ENCODE measurements at regions of chr20 and their contacts with region 1.

Region 1: GRCh38 chr20:14337400-14338171 is at the start of gene FLRT3:
- DNase-seq: peak; percentile 97
- ATAC-seq: peak; percentile 94
- H3K4me3 ChIP-seq: peak within 1 kb of the TSS; percentile 75
- H3K27ac ChIP-seq: peak within 1 kb of the TSS; percentile 44
- H3K4me1 ChIP-seq: peaks cover 15% of the 10 kb centered on the region
- H3K27me3 ChIP-seq: no peaks in the 10 kb centered on the region
- CTCF ChIP-seq: peak; percentile 96
- total RNA-seq, gene FLRT3: 2.6 and 2.8 TPM in 2 replicates

Region 2: GRCh38 chr20:14142171-14142570 is 195.4 kb before region 1 on chr20:
- CTCF ChIA-PET with region 1: interaction called, 4 read pairs
- POLR2A ChIA-PET with region 1: no interaction called
- intact Hi-C with region 1: loop called (anchors 2 kb)
- DNase-seq: peak; percentile 75
- ATAC-seq: peak; percentile 93
- H3K4me3 ChIP-seq: no peak overlapping the region
- H3K27ac ChIP-seq: no peak overlapping the region
- H3K4me1 ChIP-seq: no peaks in the 10 kb centered on the region
- H3K27me3 ChIP-seq: no peaks in the 10 kb centered on the region
- CTCF ChIP-seq: peak; percentile 81

Region 3: DNA sequence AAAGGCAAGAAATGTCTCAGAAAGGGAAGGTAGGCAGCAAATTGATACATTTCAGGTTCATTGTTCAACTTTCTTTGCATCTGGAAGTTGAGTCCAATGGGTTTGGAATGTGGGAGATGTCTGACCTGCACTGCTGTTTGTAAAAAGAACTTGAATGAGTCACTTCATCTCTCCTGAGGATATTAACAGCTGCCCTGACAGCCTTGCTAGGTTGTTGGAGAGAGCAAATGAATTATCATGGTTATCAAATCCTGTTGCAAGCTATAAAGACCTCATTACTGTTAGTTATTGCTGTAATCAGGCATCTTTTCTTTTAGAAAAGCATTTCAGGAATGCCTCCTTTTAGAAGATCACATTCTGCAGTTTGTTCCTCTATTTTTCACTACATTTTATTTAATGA is 22.8 kb after region 1 on chr20:
- CTCF ChIA-PET with region 1: no interaction called
- POLR2A ChIA-PET with region 1: no interaction called
- intact Hi-C with region 1: no loop called
- DNase-seq: peak; percentile 30
- ATAC-seq: peak; percentile 35; the same call in 1 of the 2 replicates
- H3K4me3 ChIP-seq: no peak overlapping the region
- H3K27ac ChIP-seq: no peak overlapping the region
- H3K4me1 ChIP-seq: no peaks in the 10 kb centered on the region
- H3K27me3 ChIP-seq: no peaks in the 10 kb centered on the region
- CTCF ChIP-seq: no peak

Region 4: DNA sequence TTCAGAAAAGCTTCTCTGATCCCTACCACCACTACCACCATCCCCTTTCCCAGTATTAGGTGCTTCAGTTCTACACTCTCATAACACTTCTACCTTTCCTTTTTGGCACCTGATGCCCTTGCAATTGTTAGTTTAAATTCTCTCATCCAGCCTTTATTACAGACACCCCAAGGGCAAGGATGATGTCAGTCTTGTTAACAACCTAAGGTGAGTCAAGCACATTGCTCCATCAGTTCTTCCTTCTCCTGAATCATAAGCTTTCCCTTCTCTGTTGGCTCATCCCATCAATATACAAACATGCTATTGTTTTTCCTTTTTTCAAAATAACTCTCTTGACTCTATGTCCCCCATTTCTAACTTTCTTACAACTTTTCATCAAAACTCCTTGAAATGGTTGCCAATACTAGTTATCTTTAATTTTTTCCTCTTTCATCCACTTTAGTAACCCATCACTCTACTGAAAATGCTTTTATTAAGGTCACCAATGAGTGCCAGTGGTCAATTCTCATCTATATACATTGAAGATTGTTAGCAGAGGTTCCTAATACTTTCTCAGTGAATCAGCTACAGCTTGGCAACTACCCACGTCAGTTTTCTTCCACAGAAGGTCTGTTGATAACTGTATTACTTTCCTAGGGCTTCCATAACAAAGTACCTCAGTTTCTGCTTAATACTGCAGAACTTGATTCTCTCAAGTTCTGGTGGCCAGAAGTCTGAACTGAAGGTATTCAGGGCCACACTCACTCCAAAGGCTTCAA is 97.0 kb after region 1 on chr20:
- CTCF ChIA-PET with region 1: no interaction called
- POLR2A ChIA-PET with region 1: no interaction called
- intact Hi-C with region 1: loop called (anchors 5 kb)
- DNase-seq: peak; percentile 87
- ATAC-seq: peak; percentile 75
- H3K4me3 ChIP-seq: no peak overlapping the region
- H3K27ac ChIP-seq: peak overlapping the region; percentile 72
- H3K4me1 ChIP-seq: peaks cover 28% of the 10 kb centered on the region
- H3K27me3 ChIP-seq: no peaks in the 10 kb centered on the region
- CTCF ChIP-seq: no peak

Region 5: GRCh38 chr20:14582855-14583254 is 245.3 kb after region 1 on chr20:
- CTCF ChIA-PET with region 1: interaction called, 3 read pairs
- POLR2A ChIA-PET with region 1: no interaction called
- intact Hi-C with region 1: loop called (anchors 2 kb)
- DNase-seq: peak; percentile 67
- ATAC-seq: peak; percentile 5
- H3K4me3 ChIP-seq: no peak overlapping the region
- H3K27ac ChIP-seq: peak overlapping the region; percentile 81
- H3K4me1 ChIP-seq: peaks cover 41% of the 10 kb centered on the region
- H3K27me3 ChIP-seq: no peaks in the 10 kb centered on the region
- CTCF ChIP-seq: no peak

Region 6: GRCh38 chr20:14919480-14920440 is 582.2 kb after region 1 on chr20:
- CTCF ChIA-PET with region 1: no interaction called
- POLR2A ChIA-PET with region 1: no interaction called
- intact Hi-C with region 1: loop called (anchors 5 kb)
- DNase-seq: peak; percentile 77
- ATAC-seq: peak; percentile 49
- H3K4me3 ChIP-seq: peak overlapping the region; percentile 18; the same call in 1 of the 2 replicates
- H3K27ac ChIP-seq: no peak overlapping the region
- H3K4me1 ChIP-seq: peaks cover 28% of the 10 kb centered on the region
- H3K27me3 ChIP-seq: no peaks in the 10 kb centered on the region
- CTCF ChIP-seq: no peak

Region 7: GRCh38 chr20:15930311-15931305 is 1593.0 kb after region 1 on chr20:
- CTCF ChIA-PET with region 1: interaction called, 4 read pairs
- POLR2A ChIA-PET with region 1: no interaction called
- intact Hi-C with region 1: loop called (anchors 1 kb)
- DNase-seq: peak; percentile 84
- ATAC-seq: peak; percentile 93
- H3K4me3 ChIP-seq: no peak overlapping the region
- H3K27ac ChIP-seq: no peak overlapping the region
- H3K4me1 ChIP-seq: peaks cover 20% of the 10 kb centered on the region
- H3K27me3 ChIP-seq: no peaks in the 10 kb centered on the region
- CTCF ChIP-seq: peak; percentile 92

Measured in PC-3 (cell line).